ENCODE measurements at regions of chr7 and their contacts with region 1.

Region 1: GRCh38 chr7:151448261-151449252 is 8.6 kb upstream of the CRYGN start:
- DNase-seq: peak; percentile 70
- ATAC-seq: peak; percentile 86
- H3K4me3 Mint-ChIP-seq: peak overlapping the region; percentile 79
- H3K27ac Mint-ChIP-seq: no peak overlapping the region
- H3K4me1 Mint-ChIP-seq: peaks cover 3% of the 10 kb centered on the region
- H3K27me3 Mint-ChIP-seq: peaks cover 14% of the 10 kb centered on the region
- CTCF ChIP-seq: no peak

Region 2: GRCh38 chr7:151315038-151315655 is 133.4 kb before region 1 on chr7:
- CTCF ChIA-PET with region 1: interaction called, 40 read pairs
- POLR2A ChIA-PET with region 1: interaction called, 4 read pairs
- intact Hi-C with region 1: loop called (anchors 1 kb)
- DNase-seq: peak; percentile 41
- ATAC-seq: peak; percentile 87
- H3K4me3 Mint-ChIP-seq: no peak overlapping the region
- H3K27ac Mint-ChIP-seq: no peak overlapping the region
- H3K4me1 Mint-ChIP-seq: peaks cover 2% of the 10 kb centered on the region
- H3K27me3 Mint-ChIP-seq: no peaks in the 10 kb centered on the region
- CTCF ChIP-seq: no peak

Region 3: DNA sequence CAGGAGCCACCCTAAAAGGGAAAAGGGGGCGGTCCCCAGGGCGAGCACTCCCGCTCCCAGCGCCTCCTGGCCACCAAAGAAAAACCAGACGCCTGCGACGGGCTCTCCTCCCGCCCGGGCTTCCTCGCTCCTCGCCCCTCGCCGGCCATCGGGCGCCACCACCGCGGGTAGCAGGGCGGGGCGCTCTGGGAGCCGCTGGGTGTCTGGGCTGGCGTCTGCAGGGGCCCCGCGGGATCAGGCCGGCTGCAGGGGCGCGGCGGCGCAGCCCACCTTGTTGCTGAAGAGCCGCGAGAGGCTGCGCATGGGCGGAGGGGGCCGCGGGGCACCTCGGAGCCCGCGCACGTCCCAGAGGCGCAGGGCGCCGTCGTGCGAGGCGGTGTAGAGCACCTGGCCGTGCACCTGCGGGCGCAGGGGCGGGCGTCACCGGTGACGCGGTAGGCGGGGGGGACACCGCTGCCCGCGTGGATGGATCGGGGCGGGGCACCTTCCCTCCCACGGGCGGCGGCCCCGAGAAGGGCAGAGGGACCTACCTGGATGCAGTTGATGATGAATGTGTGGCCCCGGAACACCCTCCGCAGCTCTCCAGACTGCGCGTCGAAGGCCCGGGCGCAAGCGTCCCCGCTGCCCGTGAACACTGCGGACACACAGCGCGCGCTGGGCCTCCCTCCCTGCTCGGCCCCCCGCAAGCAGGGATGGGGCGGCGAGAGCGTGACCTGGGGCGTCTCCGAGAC is 67.0 kb before region 1 on chr7:
- CTCF ChIA-PET with region 1: interaction called, 4 read pairs
- POLR2A ChIA-PET with region 1: no interaction called
- intact Hi-C with region 1: loop called (anchors 5 kb)
- DNase-seq: peak; percentile 57
- ATAC-seq: peak; percentile 78
- H3K4me3 Mint-ChIP-seq: peak overlapping the region; percentile 83
- H3K27ac Mint-ChIP-seq: peak overlapping the region; percentile 61
- H3K4me1 Mint-ChIP-seq: peaks cover 26% of the 10 kb centered on the region
- H3K27me3 Mint-ChIP-seq: peaks cover 2% of the 10 kb centered on the region
- CTCF ChIP-seq: no peak

Region 4: DNA sequence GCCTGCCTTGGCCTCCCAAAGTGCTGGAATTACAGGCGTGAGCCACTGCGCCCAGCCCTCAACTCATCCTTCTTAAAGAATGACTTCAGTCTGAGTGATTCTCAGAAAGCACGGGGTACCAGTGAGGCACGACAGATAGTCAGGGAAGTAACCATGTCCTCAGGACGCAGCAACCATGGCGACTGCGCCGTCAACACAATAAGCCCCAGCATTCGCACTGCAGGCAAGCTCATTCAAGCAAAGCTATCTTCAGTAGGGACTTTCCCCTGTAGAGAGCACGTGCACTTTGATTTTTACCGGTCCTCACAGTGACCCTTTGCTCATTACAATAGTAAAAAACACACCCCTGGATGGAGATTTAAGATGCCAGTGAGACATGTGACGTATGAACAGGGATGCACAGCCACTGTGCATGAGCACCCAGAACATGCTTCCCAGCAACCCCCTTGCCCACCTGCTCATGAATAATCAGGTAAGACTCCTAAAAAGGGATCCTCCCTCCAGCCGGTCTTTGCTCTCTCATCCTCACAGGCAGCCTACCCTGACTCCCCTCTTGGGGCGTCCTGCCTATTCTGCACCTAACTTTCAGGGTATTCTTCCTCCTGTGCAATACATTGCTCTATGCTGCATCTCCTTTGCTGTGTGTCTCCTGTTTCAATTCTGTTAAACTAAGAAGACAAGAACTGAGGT is 47.8 kb before region 1 on chr7:
- CTCF ChIA-PET with region 1: no interaction called
- POLR2A ChIA-PET with region 1: no interaction called
- intact Hi-C with region 1: loop called (anchors 2 kb)
- DNase-seq: peak; percentile 55
- ATAC-seq: peak; percentile 96
- H3K4me3 Mint-ChIP-seq: peak overlapping the region; percentile 36
- H3K27ac Mint-ChIP-seq: peak overlapping the region; percentile 81
- H3K4me1 Mint-ChIP-seq: peaks cover 26% of the 10 kb centered on the region
- H3K27me3 Mint-ChIP-seq: no peaks in the 10 kb centered on the region
- CTCF ChIP-seq: no peak

Measured in activated B cell treated with CpG ODN at 0.5 μM for 24 hours (primary cell).